ENCODE measurements at regions of chr4 and their contacts with region 1.

Region 1: GRCh38 chr4:124111922-124112321 is 600.6 kb downstream of the ANKRD50 start:
- DNase-seq: peak; percentile 52
- H3K4me3 ChIP-seq: no peak overlapping the region
- H3K27ac ChIP-seq: no peak overlapping the region
- H3K4me1 ChIP-seq: no peaks in the 10 kb centered on the region
- H3K27me3 ChIP-seq: no peaks in the 10 kb centered on the region
- CTCF ChIP-seq: peak; percentile 58 to 66

Region 2: GRCh38 chr4:123127218-123127617 is 984.7 kb before region 1 on chr4:
- CTCF ChIA-PET with region 1: no interaction called
- dilution Hi-C with region 1: no loop called
- in situ Hi-C with region 1: loop called (anchors 25 kb)
- intact Hi-C with region 1: loop called (anchors 2 kb)
- DNase-seq: peak; percentile 9
- H3K4me3 ChIP-seq: no peak overlapping the region
- H3K27ac ChIP-seq: peak overlapping the region; percentile 89
- H3K4me1 ChIP-seq: peaks cover 3% of the 10 kb centered on the region
- H3K27me3 ChIP-seq: no peaks in the 10 kb centered on the region
- CTCF ChIP-seq: peak; percentile 14 to 42

Region 3: GRCh38 chr4:123649645-123650391 is 462.1 kb before region 1 on chr4:
- CTCF ChIA-PET with region 1: no interaction called
- dilution Hi-C with region 1: no loop called
- in situ Hi-C with region 1: loop called in 1 of 2 experiments (anchors 25 kb)
- intact Hi-C with region 1: no loop called
- DNase-seq: peak; percentile 94
- H3K4me3 ChIP-seq: no peak overlapping the region
- H3K27ac ChIP-seq: peak overlapping the region; percentile 94
- H3K4me1 ChIP-seq: peaks cover 26% of the 10 kb centered on the region
- H3K27me3 ChIP-seq: no peaks in the 10 kb centered on the region
- CTCF ChIP-seq: no peak

Region 4: DNA sequence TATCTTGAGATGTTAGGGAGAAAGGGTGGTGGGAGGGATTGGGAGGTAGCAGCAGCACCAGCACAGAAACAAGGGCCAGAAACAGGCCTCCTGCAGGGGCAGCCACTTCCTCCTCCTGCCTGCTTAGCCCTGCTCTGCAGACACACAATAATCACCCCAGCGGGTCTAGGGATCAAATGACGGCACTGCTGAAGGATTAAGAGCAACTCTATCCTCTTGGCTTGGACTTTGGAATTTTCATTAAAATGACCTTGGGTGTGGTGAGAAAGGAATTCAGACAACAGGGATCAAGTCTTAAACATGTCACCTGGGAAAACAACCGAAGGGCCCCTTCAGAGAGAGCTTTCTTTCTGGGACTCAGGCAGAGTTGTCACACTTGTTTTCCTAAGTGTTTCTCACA is 361.9 kb before region 1 on chr4:
- CTCF ChIA-PET with region 1: no interaction called
- dilution Hi-C with region 1: no loop called
- in situ Hi-C with region 1: loop called in 1 of 2 experiments (anchors 25 kb)
- intact Hi-C with region 1: no loop called
- DNase-seq: no peak
- H3K4me3 ChIP-seq: no peak overlapping the region
- H3K27ac ChIP-seq: no peak overlapping the region
- H3K4me1 ChIP-seq: no peaks in the 10 kb centered on the region
- H3K27me3 ChIP-seq: no peaks in the 10 kb centered on the region
- CTCF ChIP-seq: no peak

Region 5: GRCh38 chr4:124243671-124244366 is 131.9 kb after region 1 on chr4:
- CTCF ChIA-PET with region 1: no interaction called
- dilution Hi-C with region 1: no loop called
- in situ Hi-C with region 1: no loop called
- intact Hi-C with region 1: no loop called
- DNase-seq: no peak
- H3K4me3 ChIP-seq: no peak overlapping the region
- H3K27ac ChIP-seq: no peak overlapping the region
- H3K4me1 ChIP-seq: no peaks in the 10 kb centered on the region
- H3K27me3 ChIP-seq: no peaks in the 10 kb centered on the region
- CTCF ChIP-seq: no peak

Region 6: DNA sequence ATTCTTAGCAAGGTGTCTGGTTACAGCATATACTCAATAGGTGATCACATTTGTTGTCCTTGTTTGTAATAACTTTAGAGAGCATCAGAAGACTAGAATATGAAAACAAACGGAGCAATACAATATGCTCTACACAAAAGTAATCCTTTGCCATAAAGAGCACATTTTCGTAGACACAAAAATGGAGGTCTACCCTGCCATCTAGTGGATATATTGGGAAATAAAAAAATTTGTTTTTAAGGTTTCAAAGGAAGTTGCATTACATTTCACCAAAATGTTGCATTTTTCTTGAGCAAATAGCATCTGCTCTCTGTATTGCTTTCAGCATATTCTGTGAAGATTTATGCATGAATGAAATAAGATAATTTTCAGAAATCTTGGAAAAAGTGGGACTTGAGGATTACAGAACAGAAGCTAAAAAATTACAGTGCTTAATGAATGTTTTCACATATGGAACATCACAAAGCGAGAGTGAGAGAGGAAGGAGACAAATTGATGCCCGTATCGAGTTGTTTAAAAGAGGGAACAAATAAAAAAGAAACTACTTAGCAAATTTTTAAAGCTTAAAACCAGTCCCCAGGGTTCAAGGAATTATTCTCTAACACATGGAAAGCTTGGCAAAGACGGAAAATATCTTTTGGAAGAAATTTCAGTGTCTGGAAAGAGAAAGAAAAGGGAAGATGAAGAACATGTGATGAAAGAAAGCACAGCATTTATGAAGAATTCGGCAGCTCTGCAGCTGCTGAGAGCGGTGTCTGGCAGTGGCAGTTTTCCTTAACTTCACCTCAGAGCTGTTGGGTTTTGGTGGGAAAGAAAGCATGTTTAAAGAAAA is 210.5 kb after region 1 on chr4:
- CTCF ChIA-PET with region 1: no interaction called
- dilution Hi-C with region 1: no loop called
- in situ Hi-C with region 1: no loop called
- intact Hi-C with region 1: loop called (anchors 5 kb)
- DNase-seq: peak; percentile 24
- H3K4me3 ChIP-seq: no peak overlapping the region
- H3K27ac ChIP-seq: no peak overlapping the region
- H3K4me1 ChIP-seq: no peaks in the 10 kb centered on the region
- H3K27me3 ChIP-seq: no peaks in the 10 kb centered on the region
- CTCF ChIP-seq: peak; percentile 42 to 48